PC-9 (cell line): ENCODE measurements at regions of chr3 and their contacts with region 1.

Region 1: DNA sequence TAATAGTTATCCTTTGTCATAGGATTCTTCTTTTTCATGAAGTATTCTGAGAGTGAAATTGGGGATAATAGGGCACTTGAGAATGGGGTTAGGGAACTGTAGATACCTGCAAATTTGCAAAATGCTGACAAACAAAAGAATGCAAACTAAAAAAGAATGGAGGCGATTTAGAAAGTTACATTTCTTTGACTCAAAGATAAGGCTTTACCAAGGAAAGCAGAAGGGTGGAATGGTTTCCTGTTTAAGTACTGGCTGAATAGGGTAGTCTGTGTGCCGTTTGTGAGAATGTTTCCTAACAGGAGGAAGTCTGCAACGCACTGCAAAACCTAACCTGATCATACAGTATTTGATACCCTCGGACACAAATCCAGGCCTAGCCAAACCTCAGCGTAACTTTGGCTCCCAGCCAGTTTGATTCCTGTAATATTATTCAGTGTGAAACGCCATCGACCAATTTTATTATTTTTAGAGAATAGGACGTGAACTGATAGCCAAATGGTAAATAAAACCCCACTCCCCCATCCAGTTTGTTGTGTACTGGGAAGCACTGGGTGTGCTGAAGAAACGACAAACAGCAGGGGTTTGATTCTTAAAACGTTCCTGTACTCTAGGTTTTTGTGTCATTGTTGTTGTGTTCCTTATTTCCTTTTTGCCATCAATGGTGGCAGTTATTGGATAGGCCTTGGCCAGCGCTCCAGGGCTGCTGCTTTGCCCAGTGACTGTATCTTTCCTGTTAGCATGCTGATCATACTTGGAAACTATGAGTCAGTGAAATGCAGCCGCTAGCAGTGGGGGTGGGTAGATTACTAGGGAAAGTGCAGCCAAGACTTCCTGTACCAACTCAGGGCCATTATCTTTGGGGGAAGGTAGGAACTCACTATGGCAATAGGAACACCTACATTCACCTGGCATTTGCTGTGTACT is 148.0 kb upstream of the TBL1XR1 start:
- DNase-seq: peak; percentile 93 to 98
- H3K4me3 ChIP-seq: peak overlapping the region; percentile 6; the same call in 1 of the 2 replicates
- H3K27ac ChIP-seq: peak overlapping the region; percentile 87
- H3K4me1 ChIP-seq: peaks cover 28% of the 10 kb centered on the region
- H3K27me3 ChIP-seq: no peaks in the 10 kb centered on the region
- CTCF ChIP-seq: no peak

Region 2: DNA sequence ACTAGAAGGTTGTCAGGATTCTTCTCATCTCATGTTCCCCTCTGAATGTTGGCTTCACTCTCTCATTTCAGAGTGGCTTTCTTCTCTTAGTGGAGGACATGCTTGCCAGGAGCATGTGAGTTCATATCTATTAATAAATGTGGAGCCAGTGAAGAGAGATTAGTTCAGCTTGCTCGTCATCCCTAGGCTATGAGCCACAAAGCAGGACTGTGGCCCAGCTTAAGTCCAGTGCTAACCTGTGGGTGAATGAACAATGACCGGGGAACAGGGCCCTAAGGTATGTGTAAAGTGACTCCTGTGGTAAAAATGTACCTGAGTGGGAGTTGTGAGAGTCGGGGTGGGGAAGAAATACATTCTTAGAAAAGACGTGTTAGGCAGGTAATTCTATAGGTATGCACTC is 51.1 kb before region 1 on chr3:
- CTCF ChIA-PET with region 1: no interaction called
- POLR2A ChIA-PET with region 1: interaction called, 5 read pairs
- intact Hi-C with region 1: loop called (anchors 1 kb)
- DNase-seq: peak; percentile 69 to 71
- H3K4me3 ChIP-seq: no peak overlapping the region
- H3K27ac ChIP-seq: peak overlapping the region; percentile 57; the same call in 1 of the 2 replicates
- H3K4me1 ChIP-seq: peaks cover 23% of the 10 kb centered on the region
- H3K27me3 ChIP-seq: no peaks in the 10 kb centered on the region
- CTCF ChIP-seq: no peak

Region 3: DNA sequence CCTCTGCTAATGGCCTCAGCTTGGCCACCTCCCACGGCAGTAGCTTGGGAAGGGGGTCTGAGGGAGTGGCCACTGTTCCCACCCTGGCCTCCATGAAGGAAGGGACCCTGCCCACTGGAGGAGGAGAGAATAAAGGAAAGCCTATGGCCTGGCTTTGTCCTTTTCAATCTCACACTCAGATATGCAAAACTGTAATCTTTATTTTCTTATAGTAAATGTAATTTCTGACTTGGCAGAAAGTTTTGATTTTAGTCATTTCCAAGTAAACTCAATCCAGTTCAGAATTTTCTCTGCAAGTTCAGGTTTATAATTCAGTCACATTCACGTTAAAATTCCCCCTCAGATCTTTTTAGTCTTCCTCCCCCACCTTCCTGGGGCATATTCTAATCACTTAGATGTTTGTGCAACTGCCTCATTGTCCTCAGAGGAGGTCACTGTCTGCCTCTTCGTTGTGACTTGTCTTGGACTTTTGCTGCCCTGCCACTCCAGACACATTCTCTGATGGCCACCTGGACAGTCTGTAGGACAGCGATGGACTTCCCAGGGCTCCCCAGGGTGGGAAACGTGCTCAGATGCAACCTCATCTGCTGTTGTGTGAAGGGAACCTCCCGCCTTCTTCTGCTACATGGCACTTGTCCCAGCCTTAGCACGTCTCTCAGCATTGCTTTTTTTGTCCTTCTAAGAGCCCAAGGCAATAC is 74.7 kb after region 1 on chr3:
- CTCF ChIA-PET with region 1: no interaction called
- POLR2A ChIA-PET with region 1: no interaction called
- intact Hi-C with region 1: no loop called
- DNase-seq: no peak
- H3K4me3 ChIP-seq: no peak overlapping the region
- H3K27ac ChIP-seq: no peak overlapping the region
- H3K4me1 ChIP-seq: 0 out of 2 replicates have a peak, but pooled peaks cover 7% of the 10 kb centered on the region
- H3K27me3 ChIP-seq: no peaks in the 10 kb centered on the region
- CTCF ChIP-seq: no peak